OCI-LY7 (cell line): ENCODE measurements at regions of chr9 and their contacts with region 1.

Region 1: GRCh38 chr9:2014696-2015580 is at the start of gene SMARCA2:
- DNase-seq: peak; percentile 95
- H3K4me3 ChIP-seq: peak within 1 kb of the TSS; percentile 91
- H3K27ac ChIP-seq: peak within 1 kb of the TSS; percentile 77
- H3K4me1 ChIP-seq: peaks cover 20% of the 10 kb centered on the region
- CTCF ChIP-seq: no peak
- total RNA-seq, gene SMARCA2: 54.8 and 66.6 TPM in 2 replicates

Region 2: GRCh38 chr9:1047591-1048230 is 967.2 kb before region 1 on chr9:
- CTCF ChIA-PET with region 1: no interaction called
- POLR2A ChIA-PET with region 1: no interaction called
- intact Hi-C with region 1: loop called (anchors 2 kb)
- DNase-seq: peak; percentile 3
- H3K4me3 ChIP-seq: peak overlapping the region; percentile 51
- H3K27ac ChIP-seq: no peak overlapping the region
- H3K4me1 ChIP-seq: peaks cover 12% of the 10 kb centered on the region
- CTCF ChIP-seq: no peak

Region 3: DNA sequence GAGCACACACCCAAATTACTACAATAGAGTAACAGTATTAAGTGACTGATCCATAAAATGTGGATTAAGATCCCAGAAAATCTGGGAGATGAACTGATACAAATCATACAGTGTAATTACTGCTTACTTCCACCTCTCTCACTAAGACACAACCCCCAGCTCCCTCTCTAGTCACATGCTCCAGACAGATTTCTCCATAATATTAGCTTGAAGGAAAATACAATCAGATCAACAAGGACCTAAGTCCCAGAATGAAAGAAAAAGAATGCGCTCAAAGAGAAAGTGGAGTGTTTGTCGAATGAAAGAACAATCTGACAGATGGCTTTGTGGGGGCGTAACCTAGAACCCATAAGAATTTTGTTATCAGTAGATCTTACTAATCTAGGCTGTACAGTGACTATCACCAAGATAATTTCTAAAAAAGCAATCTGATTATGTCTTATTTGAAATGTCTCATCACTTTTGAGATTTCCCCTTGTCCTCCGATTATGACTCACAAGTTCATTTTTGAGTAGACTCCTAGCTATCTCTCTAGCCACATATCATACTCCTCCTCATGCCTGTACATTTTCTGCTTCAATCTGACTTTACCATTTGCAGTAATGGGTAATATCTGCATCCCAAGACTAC is 135.6 kb before region 1 on chr9:
- CTCF ChIA-PET with region 1: no interaction called
- POLR2A ChIA-PET with region 1: no interaction called
- intact Hi-C with region 1: no loop called
- DNase-seq: no peak
- H3K4me3 ChIP-seq: no peak overlapping the region
- H3K27ac ChIP-seq: no peak overlapping the region
- H3K4me1 ChIP-seq: no peaks in the 10 kb centered on the region
- CTCF ChIP-seq: no peak

Region 4: DNA sequence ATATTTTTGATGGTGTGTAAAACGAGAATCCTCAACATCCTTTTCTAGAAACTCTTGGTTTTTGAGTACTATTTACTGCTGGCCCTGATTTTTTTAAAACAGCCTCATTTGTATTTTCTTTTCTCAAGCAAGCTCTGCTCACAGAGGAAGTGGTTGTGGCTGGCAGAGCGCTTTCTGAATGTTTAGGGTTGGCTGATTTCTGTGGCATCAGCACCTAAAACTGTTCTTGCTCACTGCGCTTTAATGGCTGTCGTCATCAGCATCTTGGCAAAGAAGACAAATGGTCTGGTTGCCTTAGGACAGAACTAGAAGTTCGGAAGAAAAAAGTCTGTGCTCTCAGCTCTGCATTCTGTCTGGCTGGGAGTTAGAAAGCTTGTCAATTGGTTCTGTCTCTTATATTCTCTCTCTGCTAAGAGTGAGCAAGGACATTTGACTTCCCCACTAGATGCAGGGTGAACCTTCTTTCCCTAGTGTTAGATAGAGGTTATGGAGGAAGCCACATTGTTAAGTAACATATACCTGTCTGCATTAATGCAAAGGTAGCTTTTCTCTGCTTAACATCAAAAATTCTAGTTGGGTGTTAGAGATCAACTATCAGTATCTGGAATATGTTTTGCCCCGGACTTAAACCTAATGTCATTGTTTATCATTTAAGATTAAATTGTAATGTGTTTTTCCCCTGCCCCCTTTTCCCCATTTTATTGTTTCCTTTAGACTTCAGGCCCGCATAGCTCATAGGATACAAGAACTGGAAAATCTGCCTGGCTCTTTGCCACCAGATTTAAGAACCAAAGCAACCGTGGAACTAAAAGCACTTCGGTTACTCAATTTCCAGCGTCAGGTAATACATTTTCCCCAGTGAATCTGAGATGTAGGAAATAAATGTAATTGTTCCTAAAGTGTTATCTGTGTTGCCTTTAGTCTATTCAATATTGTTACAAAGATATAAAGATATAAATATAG is 39.2 kb after region 1 on chr9:
- CTCF ChIA-PET with region 1: interaction called, 3 read pairs
- POLR2A ChIA-PET with region 1: interaction called, 5 read pairs
- intact Hi-C with region 1: loop called (anchors 1 kb)
- DNase-seq: peak; percentile 84
- H3K4me3 ChIP-seq: peak overlapping the region; percentile 28
- H3K27ac ChIP-seq: peak overlapping the region; percentile 36
- H3K4me1 ChIP-seq: peaks cover 22% of the 10 kb centered on the region
- CTCF ChIP-seq: no peak

Region 5: GRCh38 chr9:2087500-2088313 is 72.8 kb after region 1 on chr9:
- CTCF ChIA-PET with region 1: no interaction called
- POLR2A ChIA-PET with region 1: no interaction called
- intact Hi-C with region 1: loop called (anchors 5 kb)
- DNase-seq: peak; percentile 71
- H3K4me3 ChIP-seq: no peak overlapping the region
- H3K27ac ChIP-seq: no peak overlapping the region
- H3K4me1 ChIP-seq: no peaks in the 10 kb centered on the region
- CTCF ChIP-seq: peak; percentile 96

Region 6: GRCh38 chr9:2158111-2158610 is 143.2 kb after region 1 on chr9:
- CTCF ChIA-PET with region 1: no interaction called
- POLR2A ChIA-PET with region 1: interaction called, 3 read pairs
- intact Hi-C with region 1: loop called (anchors 2 kb)
- DNase-seq: peak; percentile 89
- H3K4me3 ChIP-seq: peak overlapping the region; percentile 75
- H3K27ac ChIP-seq: peak overlapping the region; percentile 72
- H3K4me1 ChIP-seq: peaks cover 24% of the 10 kb centered on the region
- CTCF ChIP-seq: peak; percentile 20; the same call in 1 of the 2 replicates

Region 7: GRCh38 chr9:2241836-2242741 is 227.2 kb after region 1 on chr9:
- CTCF ChIA-PET with region 1: no interaction called
- POLR2A ChIA-PET with region 1: no interaction called
- intact Hi-C with region 1: loop called (anchors 5 kb)
- DNase-seq: peak; percentile 89
- H3K4me3 ChIP-seq: peak overlapping the region; percentile 62
- H3K27ac ChIP-seq: peak overlapping the region; percentile 61
- H3K4me1 ChIP-seq: peaks cover 13% of the 10 kb centered on the region
- CTCF ChIP-seq: no peak